HEK293 (cell line): ENCODE measurements at regions of chr22 and their contacts with region 1.

Region 1: DNA sequence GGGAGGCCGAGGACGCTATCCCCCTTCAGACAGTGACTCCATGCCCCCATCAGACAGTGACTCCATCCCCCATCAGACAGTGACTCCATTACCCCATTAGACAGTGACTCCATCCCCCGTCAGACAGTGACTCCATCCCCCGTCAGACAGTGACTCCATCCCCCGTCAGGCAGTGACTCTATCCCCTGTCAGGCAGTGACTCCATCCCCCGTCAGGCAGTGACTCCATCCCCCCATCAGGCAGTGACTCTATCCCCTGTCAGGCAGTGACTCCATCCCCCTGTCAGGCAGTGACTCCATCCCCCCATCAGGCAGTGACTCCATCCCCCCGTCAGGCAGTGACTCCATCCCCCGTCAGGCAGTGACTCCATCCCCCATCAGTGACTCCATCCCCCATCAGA is 9.1 kb upstream of the TTLL8 start:
- H3K4me3 ChIP-seq: no peak overlapping the region
- H3K27ac ChIP-seq: no peak overlapping the region
- H3K4me1 ChIP-seq: no peaks in the 10 kb centered on the region
- CTCF ChIP-seq: no peak

Region 2: DNA sequence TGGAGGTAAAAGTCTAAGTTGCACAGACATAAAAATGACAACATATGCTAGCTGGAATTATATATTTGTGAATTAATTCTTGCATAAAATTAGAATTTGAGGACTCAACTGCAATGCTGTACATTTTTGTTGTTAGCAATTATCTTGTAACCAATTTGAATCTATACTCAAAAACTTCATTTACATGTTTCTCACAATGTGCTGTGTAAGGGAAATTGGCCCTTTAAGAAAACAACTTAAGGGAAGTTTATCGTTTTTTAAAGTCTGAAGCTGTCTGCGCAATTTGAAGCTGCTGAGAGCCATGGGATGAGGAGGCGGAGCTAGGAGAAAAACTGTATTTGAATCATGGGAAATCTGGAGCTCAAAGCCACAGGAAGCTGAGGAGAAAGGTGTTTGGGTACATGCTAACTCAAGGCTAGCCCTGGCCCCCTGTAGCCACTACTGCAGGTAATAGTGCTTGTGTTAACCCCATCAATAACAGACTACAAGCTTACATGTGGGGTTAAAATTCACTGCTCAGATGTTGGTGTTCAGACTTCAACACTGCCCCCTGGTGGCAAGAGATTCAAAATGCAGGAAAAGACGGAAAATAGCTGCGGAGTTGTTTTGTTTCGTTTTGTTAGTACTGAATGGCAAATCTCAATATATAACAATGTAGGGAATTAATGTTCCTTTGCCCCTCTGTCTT is 365.7 kb before region 1 on chr22:
- CTCF ChIA-PET with region 1: interaction called, 10 read pairs
- POLR2A ChIA-PET with region 1: no interaction called
- H3K4me3 ChIP-seq: no peak overlapping the region
- H3K27ac ChIP-seq: no peak overlapping the region
- H3K4me1 ChIP-seq: no peaks in the 10 kb centered on the region
- CTCF ChIP-seq: no peak

Region 3: DNA sequence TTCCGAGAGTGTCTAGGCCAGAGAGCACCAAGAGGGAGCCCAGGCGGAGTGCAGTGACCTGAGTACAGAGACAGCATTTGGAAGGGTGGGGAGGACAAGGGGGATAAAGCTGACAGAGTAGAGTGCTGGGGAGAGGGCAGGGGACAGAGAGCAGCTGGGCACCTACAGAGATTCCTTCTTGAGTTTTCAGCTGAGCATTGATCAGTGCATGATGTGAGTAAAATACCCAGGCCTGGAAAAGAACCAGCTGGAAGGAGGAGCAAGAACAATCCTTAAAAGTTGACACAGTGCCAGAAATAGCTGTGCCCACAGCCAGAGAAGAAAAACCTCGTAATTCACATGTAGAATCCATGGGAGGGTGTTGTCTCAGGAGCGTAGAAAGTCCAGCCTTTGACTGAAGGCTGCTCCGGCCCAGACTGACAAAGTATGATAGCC is 69.4 kb after region 1 on chr22:
- CTCF ChIA-PET with region 1: no interaction called
- POLR2A ChIA-PET with region 1: no interaction called
- H3K4me3 ChIP-seq: no peak overlapping the region
- H3K27ac ChIP-seq: no peak overlapping the region
- H3K4me1 ChIP-seq: peaks cover 2% of the 10 kb centered on the region; the same call in 1 of the 2 replicates
- CTCF ChIP-seq: no peak